ENCODE measurements at regions of chrX and their contacts with region 1.

Region 1: GRCh38 chrX:71181910-71182799 is 37.5 kb downstream of the NLGN3 start:
- DNase-seq: peak; percentile 88 to 94 (median 94)
- H3K4me3 ChIP-seq: peak overlapping the region; percentile 75 to 90 (median 81)
- H3K4me3 Mint-ChIP-seq: peak overlapping the region; percentile 79 to 88
- H3K27ac ChIP-seq: peak overlapping the region; percentile 89 to 94
- H3K27ac Mint-ChIP-seq: peak overlapping the region; percentile 94 to 99 (median 98)
- H3K4me1 ChIP-seq: peaks cover 6 to 11% of the 10 kb centered on the region in 2 donors
- H3K4me1 Mint-ChIP-seq: peaks cover 9% of the 10 kb centered on the region
- H3K27me3 ChIP-seq: no peaks in the 10 kb centered on the region
- H3K27me3 Mint-ChIP-seq: peaks cover 0 to 9% (median 2%) of the 10 kb centered on the region in 3 donors
- CTCF ChIP-seq: no peak

Region 2: DNA sequence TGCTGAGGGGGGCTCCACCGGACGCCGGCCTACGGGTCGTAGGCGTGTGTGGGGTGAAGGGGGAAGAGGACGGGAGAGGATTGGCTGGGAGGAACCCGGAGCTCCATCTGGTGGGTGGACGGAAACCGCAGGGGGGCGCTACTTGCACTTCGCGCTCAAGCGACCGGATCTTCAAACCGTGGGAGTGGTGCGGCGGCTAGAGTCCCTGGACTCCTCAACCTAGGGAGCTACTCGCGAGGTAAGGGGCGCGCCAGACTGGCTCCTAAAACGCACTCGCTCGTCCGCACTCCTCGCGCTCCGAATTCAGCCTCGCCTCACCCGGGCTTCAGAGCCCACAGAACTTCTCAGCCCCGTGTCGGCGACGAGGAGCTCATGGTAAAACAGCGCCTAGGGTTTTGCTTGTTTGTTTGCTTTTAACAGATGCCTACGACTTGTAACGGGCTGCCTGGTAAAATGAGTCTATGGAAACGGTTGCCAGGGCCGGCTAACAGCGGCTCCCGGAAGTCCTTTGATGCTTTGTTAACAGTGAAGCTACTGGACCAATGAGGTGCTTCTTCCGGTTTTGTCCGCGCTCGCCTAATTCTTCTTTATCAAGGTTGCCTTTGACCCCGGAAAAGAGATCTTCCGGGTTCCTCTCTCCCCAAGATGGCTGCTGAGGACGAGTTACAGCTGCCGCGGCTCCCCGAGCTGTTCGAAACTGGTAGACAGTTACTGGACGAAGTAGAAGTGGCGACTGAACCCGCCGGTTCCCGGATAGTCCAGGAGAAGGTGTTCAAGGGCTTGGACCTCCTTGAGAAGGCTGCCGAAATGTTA is 1048.6 kb before region 1 on chrX and contains the start of gene IGBP1:
- intact Hi-C with region 1: loop called in 1 of 2 experiments (anchors 10 kb)
- DNase-seq: peak; percentile 80 to 91 (median 87)
- H3K4me3 ChIP-seq: peak within 1 kb of the TSS; percentile 86 to 92 (median 88)
- H3K4me3 Mint-ChIP-seq: peak within 1 kb of the TSS; percentile 92 to 97
- H3K27ac ChIP-seq: peak within 1 kb of the TSS; percentile 93 to 94
- H3K27ac Mint-ChIP-seq: peak within 1 kb of the TSS; percentile 95 to 99 (median 97)
- H3K4me1 ChIP-seq: peaks cover 17 to 26% of the 10 kb centered on the region in 2 donors
- H3K4me1 Mint-ChIP-seq: peaks cover 15% of the 10 kb centered on the region
- H3K27me3 ChIP-seq: no peaks in the 10 kb centered on the region
- H3K27me3 Mint-ChIP-seq: peaks cover 0 to 4% (median 3%) of the 10 kb centered on the region in 3 donors
- CTCF ChIP-seq: peak; percentile 68
- polyA plus RNA-seq, gene IGBP1: 55.7 to 60.4 (median 56.8) TPM

Region 3: DNA sequence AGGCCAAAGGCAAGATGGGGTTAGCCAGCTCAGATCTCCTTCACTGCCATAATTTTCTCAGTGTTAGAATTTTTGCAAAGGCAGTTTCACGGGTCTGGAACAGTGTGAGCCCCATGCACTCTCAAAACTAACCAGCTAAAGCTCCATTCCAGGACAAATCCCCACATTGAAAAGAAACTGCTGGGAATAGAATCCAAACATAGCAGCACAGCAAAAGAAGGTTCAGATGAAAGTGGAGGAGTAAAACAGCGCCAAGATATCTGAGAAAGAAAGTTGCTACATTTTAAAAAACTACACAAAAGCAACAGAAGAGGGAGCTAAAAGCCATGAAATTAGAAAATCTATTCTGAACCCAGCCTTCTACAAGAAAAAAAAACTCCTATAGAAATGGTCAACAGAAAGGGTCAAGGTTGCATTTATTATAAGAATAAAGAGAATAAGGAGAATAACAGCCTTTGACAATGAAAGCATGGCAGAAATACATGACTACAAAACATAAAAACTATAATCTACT is 211.6 kb before region 1 on chrX:
- intact Hi-C with region 1: loop called in 1 of 2 experiments (anchors 5 kb)
- DNase-seq: peak in 1 of 3 donors; percentile 11
- H3K4me3 ChIP-seq: no peak overlapping the region
- H3K4me3 Mint-ChIP-seq: no peak overlapping the region
- H3K27ac ChIP-seq: no peak overlapping the region
- H3K27ac Mint-ChIP-seq: no peak overlapping the region
- H3K4me1 ChIP-seq: no peaks in the 10 kb centered on the region
- H3K4me1 Mint-ChIP-seq: peaks cover 7% of the 10 kb centered on the region
- H3K27me3 ChIP-seq: peaks cover 0 to 6% of the 10 kb centered on the region in 2 donors
- H3K27me3 Mint-ChIP-seq: peaks cover 0 to 11% (median 4%) of the 10 kb centered on the region in 3 donors
- CTCF ChIP-seq: peak; percentile 38

Region 4: DNA sequence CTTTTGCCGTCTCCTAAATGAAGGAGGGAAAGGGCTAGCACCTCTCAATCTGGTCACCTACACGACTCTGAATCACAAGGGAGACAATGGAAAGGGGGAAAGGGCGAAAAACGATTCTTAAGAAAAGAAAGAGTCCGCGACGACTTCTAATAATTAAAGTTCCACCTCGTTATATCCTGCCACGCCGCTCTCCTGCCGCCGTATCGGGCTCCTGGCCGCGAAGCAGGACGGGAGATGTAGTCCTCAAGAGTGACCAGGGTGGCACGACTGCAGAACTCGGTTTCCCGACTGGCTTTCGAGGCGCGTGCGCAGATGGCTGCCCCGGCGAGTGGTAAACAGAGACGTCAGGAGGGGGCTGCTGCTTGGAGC is 86.6 kb before region 1 on chrX and contains the start of gene FOXO4:
- intact Hi-C with region 1: loop called (anchors 5 to 10 kb)
- DNase-seq: peak; percentile 79 to 83 (median 79)
- H3K4me3 ChIP-seq: peak within 1 kb of the TSS; percentile 83 to 90 (median 85)
- H3K4me3 Mint-ChIP-seq: peak within 1 kb of the TSS; percentile 92 to 98
- H3K27ac ChIP-seq: peak within 1 kb of the TSS; percentile 6 to 75
- H3K27ac Mint-ChIP-seq: peak within 1 kb of the TSS; percentile 80 to 94 (median 91)
- H3K4me1 ChIP-seq: peaks cover 23 to 29% of the 10 kb centered on the region in 2 donors
- H3K4me1 Mint-ChIP-seq: peaks cover 20% of the 10 kb centered on the region
- H3K27me3 ChIP-seq: no peaks in the 10 kb centered on the region
- H3K27me3 Mint-ChIP-seq: peaks cover 0 to 20% (median 5%) of the 10 kb centered on the region in 3 donors
- CTCF ChIP-seq: no peak
- polyA plus RNA-seq, gene FOXO4: 1.4 to 9.2 (median 1.5) TPM

Region 5: GRCh38 chrX:71118032-71118984 is 63.8 kb before region 1 on chrX and contains the start of gene MED12:
- intact Hi-C with region 1: loop called in 1 of 2 experiments (anchors 5 kb)
- DNase-seq: peak; percentile 48 to 65 (median 56)
- H3K4me3 ChIP-seq: peak within 1 kb of the TSS; percentile 81 to 89 (median 86)
- H3K4me3 Mint-ChIP-seq: peak within 1 kb of the TSS; percentile 79 to 86
- H3K27ac ChIP-seq: peak within 1 kb of the TSS; percentile 79 to 86
- H3K27ac Mint-ChIP-seq: peak within 1 kb of the TSS; percentile 75 to 96 (median 89)
- H3K4me1 ChIP-seq: peaks cover 18 to 19% of the 10 kb centered on the region in 2 donors
- H3K4me1 Mint-ChIP-seq: peaks cover 14% of the 10 kb centered on the region
- H3K27me3 ChIP-seq: no peaks in the 10 kb centered on the region
- H3K27me3 Mint-ChIP-seq: peaks cover 0 to 4% (median 0%) of the 10 kb centered on the region in 3 donors
- CTCF ChIP-seq: no peak
- polyA plus RNA-seq, gene MED12: 2.4 to 17.8 (median 5.0) TPM

Region 6: DNA sequence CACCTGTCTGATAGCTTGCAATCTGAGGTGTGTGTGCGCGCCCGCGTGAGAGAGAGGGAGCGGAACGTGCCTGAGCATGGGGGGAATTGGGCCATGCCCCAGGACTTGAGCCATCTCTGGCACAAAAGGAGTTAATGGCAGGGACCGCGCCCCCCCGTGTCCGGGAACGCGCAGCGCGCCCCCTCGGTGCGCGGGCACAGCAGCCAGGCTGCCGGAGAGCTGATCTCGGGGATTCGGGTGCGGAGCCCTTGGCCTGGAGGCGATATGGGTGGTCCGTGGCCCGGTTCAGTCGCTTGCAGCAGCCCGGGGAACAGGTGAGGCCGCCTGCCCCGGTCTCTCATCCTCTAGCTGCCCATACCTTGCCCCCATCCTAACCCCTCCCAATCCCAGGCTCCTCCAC is 37.5 kb before region 1 on chrX and contains the start of gene NLGN3:
- intact Hi-C with region 1: no loop called
- DNase-seq: no peak
- H3K4me3 ChIP-seq: peak within 1 kb of the TSS in 1 of 3 experiments; percentile 69
- H3K4me3 Mint-ChIP-seq: peak within 1 kb of the TSS; percentile 34 to 42
- H3K27ac ChIP-seq: no peak within 1 kb of the TSS
- H3K27ac Mint-ChIP-seq: peak within 1 kb of the TSS in 6 of 7 donors; percentile 22 to 68 (median 46)
- H3K4me1 ChIP-seq: peaks cover 17 to 29% of the 10 kb centered on the region in 2 donors
- H3K4me1 Mint-ChIP-seq: peaks cover 34% of the 10 kb centered on the region
- H3K27me3 ChIP-seq: no peaks in the 10 kb centered on the region
- H3K27me3 Mint-ChIP-seq: peaks cover 0 to 17% (median 0%) of the 10 kb centered on the region in 3 donors
- CTCF ChIP-seq: no peak
- polyA plus RNA-seq, gene NLGN3: 0.05 to 0.80 TPM in 2 of 3 donors, not detected in the other

Region 7: GRCh38 chrX:71236836-71237235 is 54.7 kb after region 1 on chrX:
- intact Hi-C with region 1: no loop called
- DNase-seq: no peak
- H3K4me3 ChIP-seq: no peak overlapping the region
- H3K4me3 Mint-ChIP-seq: no peak overlapping the region
- H3K27ac ChIP-seq: no peak overlapping the region
- H3K27ac Mint-ChIP-seq: peak overlapping the region in 1 of 7 donors; percentile 1
- H3K4me1 ChIP-seq: peaks cover 6 to 7% of the 10 kb centered on the region in 2 donors
- H3K4me1 Mint-ChIP-seq: peaks cover 16% of the 10 kb centered on the region
- H3K27me3 ChIP-seq: no peaks in the 10 kb centered on the region
- H3K27me3 Mint-ChIP-seq: peaks cover 0 to 2% (median 0%) of the 10 kb centered on the region in 3 donors
- CTCF ChIP-seq: no peak